Gastrocnemius medialis (tissue), 4 donors: ENCODE measurements at regions of chr4 and their contacts with region 1.

Region 1: DNA sequence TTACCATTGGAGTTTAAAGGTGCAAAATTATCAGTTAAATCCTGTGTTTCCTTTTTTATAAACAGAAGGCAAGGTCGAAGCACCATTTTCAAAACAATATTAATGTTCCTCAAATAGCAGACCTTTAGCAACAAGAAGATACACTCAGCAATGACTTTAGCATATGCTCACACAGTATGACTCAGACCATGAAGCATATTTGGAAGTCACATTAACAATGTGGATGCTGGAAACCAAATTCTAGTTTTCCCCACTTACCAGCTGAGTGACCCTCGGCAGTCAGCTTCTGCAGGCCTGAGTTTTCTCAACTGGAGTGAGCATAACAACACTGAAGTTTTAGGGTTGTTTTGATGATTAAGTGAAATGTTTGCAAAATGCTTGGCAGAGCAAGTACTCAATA is 130.5 kb downstream of the ANK2 start:
- DNase-seq: no peak
- ATAC-seq: peak; percentile 51 to 61
- H3K4me3 ChIP-seq: peak overlapping the region; percentile 9 to 24 (median 22)
- H3K27ac ChIP-seq: peak overlapping the region; percentile 77 to 85 (median 83)
- H3K4me1 ChIP-seq: peaks cover 46 to 64% of the 10 kb centered on the region in 2 donors
- H3K27me3 ChIP-seq: no peaks in the 10 kb centered on the region
- CTCF ChIP-seq: no peak
- POLR2A ChIP-seq: no peak

Region 2: GRCh38 chr4:112674376-112674775 is 505.6 kb before region 1 on chr4:
- in situ Hi-C with region 1: no loop called
- intact Hi-C with region 1: loop called (anchors 2 kb)
- DNase-seq: peak in 1 of 2 donors; percentile 18
- ATAC-seq: no peak
- H3K4me3 ChIP-seq: no peak overlapping the region
- H3K27ac ChIP-seq: peak overlapping the region in 2 of 4 donors; percentile 83 to 92
- H3K4me1 ChIP-seq: peaks cover 24 to 26% of the 10 kb centered on the region in 2 donors
- H3K27me3 ChIP-seq: no peaks in the 10 kb centered on the region
- CTCF ChIP-seq: no peak
- POLR2A ChIP-seq: no peak

Region 3: DNA sequence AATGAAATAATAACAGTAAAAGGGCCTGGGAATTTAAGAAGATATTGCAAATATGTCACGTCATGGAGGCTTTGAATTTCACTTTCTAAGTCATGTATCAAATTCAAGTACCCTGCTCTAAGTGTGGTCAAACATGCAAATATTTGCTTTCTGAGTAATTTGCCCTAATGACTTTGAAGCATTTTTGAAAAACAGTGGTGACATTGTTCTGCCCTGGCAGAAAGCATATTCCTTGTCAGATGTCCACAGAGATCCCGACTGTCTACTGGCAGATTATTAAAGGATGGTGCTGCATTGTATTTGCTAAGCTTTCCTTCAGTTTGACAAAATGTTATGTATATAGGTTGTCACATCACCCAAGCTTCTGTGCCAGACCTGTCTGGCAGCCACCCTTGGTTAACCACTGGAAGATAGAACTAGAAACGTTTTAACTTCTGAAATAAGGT is 38.1 kb before region 1 on chr4:
- in situ Hi-C with region 1: no loop called
- intact Hi-C with region 1: loop called (anchors 5 kb)
- DNase-seq: no peak
- ATAC-seq: no peak
- H3K4me3 ChIP-seq: peak overlapping the region in 1 of 4 donors; percentile 13
- H3K27ac ChIP-seq: peak overlapping the region in 2 of 4 donors; percentile 18 to 26
- H3K4me1 ChIP-seq: peaks cover 9 to 20% of the 10 kb centered on the region in 2 donors
- H3K27me3 ChIP-seq: no peaks in the 10 kb centered on the region
- CTCF ChIP-seq: no peak
- POLR2A ChIP-seq: no peak